Adrenal gland (tissue), 19 donors: ENCODE measurements at regions of chr1 and their contacts with region 1.

Region 1: DNA sequence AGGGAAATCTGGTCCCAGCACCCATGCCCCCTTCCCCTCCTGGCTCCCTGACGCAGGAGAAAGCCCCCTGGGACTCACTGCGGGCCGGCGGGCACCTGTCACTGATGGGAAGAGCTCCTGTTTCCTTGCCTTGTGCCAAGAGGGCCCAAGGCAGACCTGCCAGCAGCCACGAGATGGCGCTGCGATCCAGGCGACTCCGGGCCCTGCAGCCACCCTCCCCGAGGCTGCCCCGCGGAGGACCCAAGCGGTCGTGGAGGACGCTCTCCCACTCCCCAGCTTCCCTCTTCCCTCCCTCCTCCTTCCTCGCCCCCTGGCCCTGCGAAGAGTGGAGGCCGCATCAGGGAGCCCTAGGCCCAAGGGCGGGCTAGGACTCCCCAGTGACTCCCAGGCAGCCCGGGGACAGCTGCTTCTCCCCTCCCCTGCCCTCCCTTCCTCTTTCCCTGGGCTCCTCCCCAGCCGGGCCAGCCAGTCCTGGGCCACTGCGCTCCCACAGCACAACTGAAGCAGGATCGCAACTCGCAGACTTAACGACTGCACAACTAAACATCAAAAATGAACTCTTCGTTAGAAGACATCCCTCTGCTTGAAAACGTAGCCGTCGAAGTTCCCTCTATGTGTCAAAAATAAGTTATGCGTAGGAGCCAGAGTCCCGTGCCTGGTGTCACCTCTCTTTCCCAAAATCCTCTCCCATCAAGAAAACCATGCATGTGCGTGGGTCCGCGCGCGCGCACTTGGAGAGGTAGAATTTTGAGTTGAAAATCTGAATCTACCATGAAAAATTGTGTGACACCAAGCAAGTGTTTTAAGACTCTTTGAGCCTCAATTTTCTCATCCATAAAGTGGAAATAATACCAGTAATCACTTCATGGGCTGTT is 34.2 kb downstream of the BATF3 start:
- DNase-seq: peak; percentile 82 to 88 (median 85)
- H3K4me3 ChIP-seq: peak overlapping the region in 3 of 4 donors; percentile 5 to 64 (median 33)
- H3K27ac ChIP-seq: peak overlapping the region in 4 of 5 donors; percentile 33 to 83 (median 66)
- H3K4me1 ChIP-seq: peaks cover 6 to 32% of the 10 kb centered on the region in 2 donors
- H3K27me3 ChIP-seq: no peaks in the 10 kb centered on the region
- CTCF ChIP-seq: peak; percentile 82 to 97 (median 95)
- POLR2A ChIP-seq: no peak

Region 2: GRCh38 chr1:212782422-212783154 is 117.1 kb after region 1 on chr1:
- intact Hi-C with region 1: loop called (anchors 2 to 10 kb)
- DNase-seq: peak in 1 of 7 donors; percentile 25
- H3K4me3 ChIP-seq: no peak overlapping the region
- H3K27ac ChIP-seq: no peak overlapping the region
- H3K4me1 ChIP-seq: peaks cover 0 to 3% of the 10 kb centered on the region in 2 donors
- H3K27me3 ChIP-seq: no peaks in the 10 kb centered on the region
- CTCF ChIP-seq: peak; percentile 48 to 78 (median 68)
- POLR2A ChIP-seq: no peak

Region 3: DNA sequence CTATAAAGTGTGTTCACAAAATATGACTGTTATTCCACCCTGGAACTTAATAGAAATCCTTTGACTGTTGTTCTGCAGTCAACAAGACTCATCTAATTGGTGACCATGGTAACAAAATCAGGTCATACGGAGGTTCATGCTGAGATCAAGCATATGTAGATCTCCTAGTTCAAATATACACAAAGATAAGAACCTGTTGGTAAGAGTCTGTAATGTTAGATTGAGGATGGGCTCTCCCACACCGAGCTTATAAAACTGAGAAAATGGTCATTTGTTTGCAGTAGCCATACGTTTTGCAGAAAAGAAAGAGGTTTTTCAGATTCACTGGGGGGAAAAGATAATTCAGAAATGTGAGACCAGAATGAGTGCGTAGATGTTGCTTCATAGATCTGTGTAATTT is 853.6 kb after region 1 on chr1:
- intact Hi-C with region 1: no loop called
- DNase-seq: no peak
- H3K4me3 ChIP-seq: no peak overlapping the region
- H3K27ac ChIP-seq: no peak overlapping the region
- H3K4me1 ChIP-seq: no peaks in the 10 kb centered on the region
- H3K27me3 ChIP-seq: no peaks in the 10 kb centered on the region
- CTCF ChIP-seq: no peak
- POLR2A ChIP-seq: no peak